ENCODE measurements at regions of chr13 and their contacts with region 1.

Region 1: DNA sequence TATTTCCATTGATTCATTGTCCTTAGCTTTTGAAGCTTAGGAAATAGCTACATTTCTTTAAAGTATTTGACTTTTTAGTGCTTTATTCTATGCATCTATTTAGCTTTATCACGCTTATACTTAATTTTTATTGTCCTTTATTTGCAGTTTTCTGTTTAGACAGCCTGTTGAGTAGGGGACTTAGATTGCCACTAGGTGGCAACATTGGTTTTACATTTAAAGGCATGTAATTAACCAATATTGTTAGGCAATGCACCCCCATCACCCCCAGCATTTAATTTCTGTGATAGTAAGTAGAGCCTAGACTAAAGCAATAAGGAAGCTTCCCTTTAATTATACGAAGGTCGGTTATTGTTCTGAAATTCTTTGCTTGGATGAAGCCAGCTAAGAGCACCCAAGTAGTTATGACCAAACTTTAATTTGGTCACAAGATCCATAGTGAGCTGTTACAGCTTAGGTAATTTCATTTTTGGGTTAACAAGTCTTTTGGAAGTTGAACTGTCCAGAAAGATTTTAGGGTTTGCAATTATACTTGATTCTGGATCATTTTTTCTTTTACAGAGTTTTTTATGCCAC is 36.5 kb downstream of the B3GLCT start:
- DNase-seq: peak; percentile 31
- ATAC-seq: peak; percentile 63
- H3K4me3 ChIP-seq: no peak overlapping the region
- H3K27ac ChIP-seq: no peak overlapping the region
- H3K4me1 ChIP-seq: no peaks in the 10 kb centered on the region
- H3K27me3 ChIP-seq: no peaks in the 10 kb centered on the region
- CTCF ChIP-seq: peak; percentile 62
- EP300 ChIP-seq: no peak
- POLR2A ChIP-seq: no peak
- RAD21 ChIP-seq: 0 out of 2 replicates have a peak, but pooled peaks have one; percentile 23

Region 2: GRCh38 chr13:31322026-31322425 is 85.7 kb after region 1 on chr13:
- CTCF ChIA-PET with region 1: no interaction called
- POLR2A ChIA-PET with region 1: no interaction called
- in situ Hi-C with region 1: no loop called
- intact Hi-C with region 1: no loop called
- DNase-seq: no peak
- ATAC-seq: no peak
- H3K4me3 ChIP-seq: no peak overlapping the region
- H3K27ac ChIP-seq: no peak overlapping the region
- H3K4me1 ChIP-seq: no peaks in the 10 kb centered on the region
- H3K27me3 ChIP-seq: no peaks in the 10 kb centered on the region
- CTCF ChIP-seq: no peak
- EP300 ChIP-seq: no peak
- POLR2A ChIP-seq: no peak
- RAD21 ChIP-seq: no peak

Region 3: GRCh38 chr13:31424117-31424729 is 187.9 kb after region 1 on chr13:
- CTCF ChIA-PET with region 1: interaction called, 17 read pairs
- POLR2A ChIA-PET with region 1: no interaction called
- in situ Hi-C with region 1: loop called (anchors 5 kb)
- intact Hi-C with region 1: loop called (anchors 1 kb)
- DNase-seq: peak; percentile 64
- ATAC-seq: peak; percentile 100
- H3K4me3 ChIP-seq: no peak overlapping the region
- H3K27ac ChIP-seq: no peak overlapping the region
- H3K4me1 ChIP-seq: no peaks in the 10 kb centered on the region
- H3K27me3 ChIP-seq: peaks cover 0 to 2% of the 10 kb centered on the region in 2 experiments; a peak in 1 of 5 replicates
- CTCF ChIP-seq: peak; percentile 92
- EP300 ChIP-seq: no peak
- POLR2A ChIP-seq: no peak
- RAD21 ChIP-seq: no peak; the same call in 1 of the 2 replicates